ENCODE measurements at regions of chr1 and their contacts with region 1.

Region 1: GRCh38 chr1:113389953-113390834 is at the start of gene MAGI3:
- DNase-seq: peak; percentile 97
- H3K4me3 Mint-ChIP-seq: peak within 1 kb of the TSS; percentile 83
- H3K27ac Mint-ChIP-seq: peak within 1 kb of the TSS; percentile 48
- H3K4me1 Mint-ChIP-seq: peaks cover 20% of the 10 kb centered on the region
- H3K27me3 Mint-ChIP-seq: no peaks in the 10 kb centered on the region
- total RNA-seq, gene MAGI3: 5.9 to 6.4 TPM

Region 2: GRCh38 chr1:112660072-112660471 is 730.1 kb before region 1 on chr1:
- CTCF ChIA-PET with region 1: no interaction called
- intact Hi-C with region 1: no loop called
- DNase-seq: no peak
- H3K4me3 Mint-ChIP-seq: no peak overlapping the region
- H3K27ac Mint-ChIP-seq: no peak overlapping the region
- H3K4me1 Mint-ChIP-seq: no peaks in the 10 kb centered on the region
- H3K27me3 Mint-ChIP-seq: no peaks in the 10 kb centered on the region

Region 3: DNA sequence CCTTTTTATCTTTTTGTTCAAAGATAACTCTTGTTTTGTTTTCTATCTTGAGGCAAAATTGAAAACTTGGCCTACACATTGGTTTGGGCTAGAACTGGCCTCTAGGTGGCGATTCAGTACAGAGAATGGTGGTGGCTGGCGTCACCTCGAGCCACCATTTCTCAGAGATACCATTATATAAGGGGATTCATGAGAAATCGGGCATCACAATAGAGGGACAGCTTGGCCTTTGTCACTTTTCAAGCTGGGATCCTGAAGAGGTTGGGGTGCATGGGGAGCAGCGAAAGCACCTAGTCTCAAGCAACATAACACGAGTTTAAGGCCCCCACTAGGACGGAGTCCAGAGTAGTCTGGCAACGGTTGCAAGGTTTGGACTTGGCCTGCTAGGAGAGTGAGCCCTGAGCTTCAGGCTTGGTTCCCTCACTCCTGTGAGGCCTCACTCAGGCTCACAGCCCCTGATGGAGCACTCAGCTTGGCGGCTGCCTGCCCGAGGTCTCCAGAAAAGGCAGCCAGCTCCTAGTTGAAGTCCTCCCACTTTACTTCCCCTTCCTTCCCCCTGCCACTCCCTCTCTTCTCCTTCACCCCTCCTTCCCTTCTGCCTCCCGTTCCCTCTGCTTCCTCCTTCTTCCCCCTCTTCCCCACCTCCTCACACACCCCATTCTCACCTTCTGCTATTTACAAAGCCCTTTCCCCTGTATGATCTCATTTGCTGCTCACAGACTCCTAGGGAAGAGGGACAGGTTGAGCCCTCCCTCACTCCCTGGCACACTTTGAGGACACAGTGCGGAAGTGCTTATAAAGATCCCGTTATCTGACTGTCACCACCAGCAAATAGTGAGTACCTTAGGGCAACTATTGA is 249.4 kb before region 1 on chr1:
- CTCF ChIA-PET with region 1: interaction called, 4 read pairs
- intact Hi-C with region 1: loop called (anchors 1 kb)
- DNase-seq: peak; percentile 81
- H3K4me3 Mint-ChIP-seq: no peak overlapping the region
- H3K27ac Mint-ChIP-seq: no peak overlapping the region
- H3K4me1 Mint-ChIP-seq: peaks cover 22% of the 10 kb centered on the region
- H3K27me3 Mint-ChIP-seq: no peaks in the 10 kb centered on the region

Region 4: DNA sequence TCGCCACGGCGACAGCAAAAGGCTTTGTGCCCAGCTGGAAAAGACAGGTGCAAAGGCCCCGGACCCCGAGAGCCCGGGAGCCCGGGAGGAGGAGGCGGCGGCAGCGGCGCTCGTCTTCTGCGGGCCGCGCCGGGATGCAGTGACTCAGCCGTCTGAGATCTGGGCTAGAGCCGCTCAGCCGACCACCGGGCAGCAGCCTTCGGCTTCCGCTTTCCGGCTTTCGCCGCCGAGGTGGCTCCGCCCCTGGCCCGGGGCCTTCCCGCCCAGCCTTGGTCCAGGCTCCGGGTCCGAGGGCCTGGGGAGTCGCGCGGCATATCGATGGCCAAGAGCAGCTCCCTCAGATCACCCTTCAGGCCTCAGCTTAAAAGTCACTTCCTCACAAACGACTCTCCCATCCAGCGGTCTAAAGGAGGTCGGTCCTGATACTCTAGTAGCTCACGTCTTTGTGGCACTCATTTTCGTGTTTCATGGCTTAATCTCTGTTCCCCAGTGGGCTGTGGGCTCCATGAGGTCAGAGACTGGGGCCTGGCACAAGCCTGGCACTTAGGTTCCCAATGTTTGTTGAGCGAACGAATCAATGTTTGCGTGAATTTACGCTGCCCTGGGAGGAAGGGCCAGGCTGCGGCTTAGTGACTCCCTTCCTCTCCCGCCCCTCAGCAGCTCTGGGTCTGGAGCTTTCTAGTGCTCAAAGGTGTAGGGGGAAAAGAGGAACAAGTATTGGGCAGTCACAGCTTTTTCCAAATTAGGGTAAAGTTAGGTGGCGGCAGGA is 369.3 kb after region 1 on chr1 and contains the start of gene PHTF1:
- CTCF ChIA-PET with region 1: no interaction called
- intact Hi-C with region 1: loop called (anchors 2 kb)
- DNase-seq: peak; percentile 63
- H3K4me3 Mint-ChIP-seq: peak within 1 kb of the TSS; percentile 92
- H3K27ac Mint-ChIP-seq: peak within 1 kb of the TSS; percentile 96
- H3K4me1 Mint-ChIP-seq: peaks cover 14% of the 10 kb centered on the region
- H3K27me3 Mint-ChIP-seq: no peaks in the 10 kb centered on the region
- total RNA-seq, gene PHTF1: 5.4 to 6.3 TPM

Region 5: GRCh38 chr1:113811888-113812660 is 421.9 kb after region 1 on chr1 and contains the start of gene RSBN1:
- CTCF ChIA-PET with region 1: no interaction called
- intact Hi-C with region 1: loop called (anchors 1 kb)
- DNase-seq: peak; percentile 99
- H3K4me3 Mint-ChIP-seq: peak within 1 kb of the TSS; percentile 98
- H3K27ac Mint-ChIP-seq: peak within 1 kb of the TSS; percentile 94
- H3K4me1 Mint-ChIP-seq: peaks cover 31% of the 10 kb centered on the region
- H3K27me3 Mint-ChIP-seq: no peaks in the 10 kb centered on the region
- total RNA-seq, gene RSBN1: 13.6 to 14.3 TPM

Region 6: DNA sequence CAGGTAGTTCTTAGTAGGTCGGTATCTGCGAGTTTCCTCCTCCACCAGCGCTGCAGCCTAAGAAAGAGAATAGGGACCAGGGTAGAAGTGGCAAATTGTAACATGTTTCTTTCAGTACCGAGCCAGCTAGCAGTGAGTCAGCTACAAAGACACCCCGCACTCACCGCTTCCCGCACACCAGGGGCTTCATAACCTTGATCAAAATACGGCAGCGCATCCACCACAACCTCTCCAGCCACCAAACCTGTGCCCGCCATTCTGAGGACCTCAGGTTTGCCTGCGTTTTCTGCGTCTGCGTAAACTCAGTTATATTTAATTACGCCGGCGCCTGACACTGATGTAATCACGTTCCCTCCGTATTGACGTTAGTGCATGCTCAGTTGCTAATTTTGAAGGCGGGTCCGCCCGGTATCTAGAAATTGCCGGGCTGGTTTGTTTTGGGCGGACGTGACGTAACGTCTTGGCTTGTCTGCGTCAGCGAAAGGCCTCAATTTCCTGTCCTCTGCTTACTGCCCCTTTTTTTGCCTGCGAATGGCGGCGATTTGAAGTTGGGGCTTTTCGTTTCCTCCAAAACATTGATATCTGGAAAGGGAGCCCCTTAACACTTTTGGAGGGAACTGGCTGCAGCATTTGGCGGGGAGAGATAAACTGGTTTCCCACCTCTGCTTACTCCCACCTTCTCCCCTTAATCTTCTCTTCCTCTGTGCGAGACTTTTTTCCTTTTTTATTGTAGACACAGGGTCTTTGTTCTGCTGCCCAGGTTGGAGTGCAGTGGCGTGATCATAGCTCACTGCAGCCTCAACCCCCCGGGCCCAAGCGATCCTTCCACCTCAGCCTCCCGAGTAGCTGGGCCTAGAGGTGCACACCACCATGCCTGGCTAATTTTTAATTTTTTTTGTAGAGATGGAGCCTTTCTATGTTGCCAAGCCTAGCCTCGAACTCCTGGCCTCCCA is 1191.4 kb after region 1 on chr1 and contains the start of gene BCAS2:
- CTCF ChIA-PET with region 1: no interaction called
- intact Hi-C with region 1: loop called (anchors 5 kb)
- DNase-seq: peak; percentile 99
- H3K4me3 Mint-ChIP-seq: peak within 1 kb of the TSS; percentile 99
- H3K27ac Mint-ChIP-seq: peak within 1 kb of the TSS; percentile 96
- H3K4me1 Mint-ChIP-seq: peaks cover 32% of the 10 kb centered on the region
- H3K27me3 Mint-ChIP-seq: no peaks in the 10 kb centered on the region
- total RNA-seq, gene BCAS2: 46.5 to 48.0 TPM